Sigmoid colon (tissue), 7 donors: ENCODE measurements at regions of chr11 and their contacts with region 1.

Region 1: DNA sequence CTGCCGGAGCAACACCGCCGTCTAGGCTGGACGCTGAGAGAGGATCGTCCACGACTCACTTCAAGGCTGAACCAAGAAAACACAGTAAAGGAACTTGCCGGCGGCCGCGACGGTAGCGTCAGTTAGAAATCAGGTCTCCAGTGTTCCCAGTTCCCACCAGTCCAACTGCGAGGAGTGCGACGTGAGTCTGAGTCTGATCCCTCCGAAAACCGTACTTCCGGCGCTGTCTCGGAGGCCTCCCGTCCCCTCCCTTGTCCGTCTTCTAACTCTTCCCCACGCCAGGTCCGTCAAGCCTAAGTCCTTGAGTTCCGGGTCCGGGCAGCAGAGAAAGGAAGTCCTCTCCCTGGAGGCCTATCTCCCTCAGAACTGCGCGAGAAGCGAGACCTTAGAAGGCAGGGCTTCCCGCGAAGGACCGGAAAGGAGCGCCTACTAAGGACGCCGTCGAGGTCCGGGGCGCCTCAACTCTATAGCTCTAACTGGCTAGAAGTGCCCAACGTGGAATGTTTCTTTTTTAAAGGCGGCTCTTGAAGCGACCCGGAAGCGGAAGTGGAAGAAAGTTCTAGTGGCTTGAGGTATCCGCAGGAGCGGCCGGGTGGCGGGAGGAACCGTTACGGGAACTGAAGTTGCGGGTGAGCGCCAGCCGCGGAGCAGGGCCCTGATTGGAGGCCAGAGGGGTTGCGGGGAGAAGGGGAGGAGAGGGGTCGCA is at the starts of genes BANF1 and EIF1AD:
- DNase-seq: peak; percentile 97
- H3K4me3 ChIP-seq: peak within 1 kb of the TSS; percentile 66 to 85 (median 72)
- H3K27ac ChIP-seq: peak within 1 kb of the TSS; percentile 86 to 94 (median 92)
- H3K4me1 ChIP-seq: peaks cover 0 to 31% (median 26%) of the 10 kb centered on the region in 4 donors
- H3K27me3 ChIP-seq: no peaks in the 10 kb centered on the region
- CTCF ChIP-seq: no peak
- EP300 ChIP-seq: no peak
- POLR2A ChIP-seq: peak; percentile 17 to 56
- total RNA-seq, gene BANF1: 40.4 to 76.4 (median 50.5) TPM
- total RNA-seq, gene EIF1AD: 19.4 to 23.9 (median 21.1) TPM

Region 2: DNA sequence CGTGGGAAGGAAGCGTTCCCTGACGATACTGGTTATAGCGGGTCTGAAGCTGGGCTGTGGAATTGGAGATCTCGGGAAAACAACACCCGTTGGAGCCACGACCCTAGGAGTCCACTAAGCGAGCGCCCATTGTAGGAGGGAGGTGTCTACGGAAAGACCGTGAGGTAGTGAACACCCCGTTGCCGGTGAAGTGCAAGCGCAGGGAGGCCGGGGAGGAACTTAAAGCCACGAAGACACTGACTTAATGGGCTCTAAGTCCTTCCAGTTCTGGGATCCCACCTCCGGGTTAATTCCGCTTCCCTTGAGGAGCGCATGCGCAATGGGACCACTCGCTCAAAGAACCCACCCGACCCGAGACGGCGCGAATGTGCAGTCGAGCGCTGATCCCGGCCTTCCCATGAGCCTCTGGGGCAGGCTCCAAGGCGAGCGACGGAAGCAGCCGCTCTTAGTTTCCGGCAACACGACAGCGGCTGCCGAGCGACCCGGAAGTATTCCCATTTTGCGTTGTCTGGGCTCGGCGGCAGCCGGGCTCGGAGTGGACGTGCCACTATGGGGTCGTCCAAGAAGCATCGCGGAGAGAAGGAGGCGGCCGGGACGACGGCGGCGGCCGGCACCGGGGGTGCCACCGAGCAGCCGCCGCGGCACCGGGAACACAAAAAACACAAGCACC is 40.7 kb before region 1 on chr11 and contains the start of gene SART1:
- intact Hi-C with region 1: loop called (anchors 1 kb)
- DNase-seq: peak; percentile 99
- H3K4me3 ChIP-seq: peak within 1 kb of the TSS; percentile 92 to 99 (median 96)
- H3K27ac ChIP-seq: peak within 1 kb of the TSS; percentile 90 to 94 (median 92)
- H3K4me1 ChIP-seq: peaks cover 0 to 31% (median 30%) of the 10 kb centered on the region in 4 donors
- H3K27me3 ChIP-seq: no peaks in the 10 kb centered on the region
- CTCF ChIP-seq: no peak
- EP300 ChIP-seq: peak in 1 of 4 donors; percentile 49
- POLR2A ChIP-seq: peak in 1 of 2 donors; percentile 58
- total RNA-seq, gene SART1: 33.8 to 38.8 (median 37.0) TPM

Region 3: DNA sequence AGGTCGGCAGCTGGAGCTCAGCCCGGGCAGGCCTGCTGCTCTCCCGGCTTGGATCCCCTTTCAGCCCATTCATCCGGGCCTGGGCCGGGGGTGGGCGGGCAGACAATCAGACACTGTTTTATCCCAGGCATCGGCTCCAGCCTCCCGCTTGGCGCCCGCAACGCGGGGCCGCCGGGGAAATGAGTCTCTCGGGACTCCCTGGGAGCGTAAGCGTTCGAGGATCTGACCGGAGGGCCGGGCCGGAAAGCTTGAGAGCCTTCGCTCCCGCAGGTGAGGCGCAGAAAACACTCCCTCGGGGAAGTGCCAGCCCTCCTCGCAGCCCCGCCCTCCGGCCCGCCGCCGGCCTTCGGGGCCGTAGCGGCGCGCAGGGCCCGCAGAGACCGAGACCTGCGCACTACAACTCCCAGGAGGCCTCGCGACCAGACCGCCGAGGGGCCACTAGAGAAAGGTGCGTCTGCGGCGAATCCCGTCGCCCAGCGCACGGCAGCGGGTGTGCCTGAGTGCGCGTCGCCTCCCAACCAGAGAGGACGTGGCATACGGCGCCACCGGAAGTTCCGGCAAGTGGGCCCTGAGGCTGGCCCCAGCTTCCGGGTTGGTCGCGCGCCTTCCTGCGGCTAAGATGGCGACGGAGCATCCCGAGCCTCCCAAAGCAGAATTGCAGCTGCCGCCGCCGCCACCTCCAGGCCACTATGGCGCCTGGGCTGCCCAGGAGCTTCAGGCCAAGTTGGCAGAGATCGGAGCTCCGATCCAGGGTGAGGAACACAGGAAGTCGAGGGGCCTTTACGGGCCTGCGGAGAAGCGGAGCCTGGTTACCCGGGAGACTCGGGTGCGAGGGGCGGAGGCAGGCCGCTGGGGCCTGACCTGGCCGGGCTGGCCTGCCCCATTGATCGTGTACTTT is 49.9 kb after region 1 on chr11 and contains the start of gene SF3B2:
- intact Hi-C with region 1: loop called (anchors 5 kb)
- DNase-seq: peak; percentile 99
- H3K4me3 ChIP-seq: peak within 1 kb of the TSS; percentile 85 to 98 (median 91)
- H3K27ac ChIP-seq: peak within 1 kb of the TSS; percentile 84 to 90 (median 87)
- H3K4me1 ChIP-seq: peaks cover 0 to 33% (median 23%) of the 10 kb centered on the region in 4 donors
- H3K27me3 ChIP-seq: peaks cover 14 to 26% (median 21%) of the 10 kb centered on the region in 3 donors
- CTCF ChIP-seq: no peak
- EP300 ChIP-seq: no peak
- POLR2A ChIP-seq: peak; percentile 48 to 50
- total RNA-seq, gene SF3B2: 75.5 to 122 (median 102) TPM

Region 4: DNA sequence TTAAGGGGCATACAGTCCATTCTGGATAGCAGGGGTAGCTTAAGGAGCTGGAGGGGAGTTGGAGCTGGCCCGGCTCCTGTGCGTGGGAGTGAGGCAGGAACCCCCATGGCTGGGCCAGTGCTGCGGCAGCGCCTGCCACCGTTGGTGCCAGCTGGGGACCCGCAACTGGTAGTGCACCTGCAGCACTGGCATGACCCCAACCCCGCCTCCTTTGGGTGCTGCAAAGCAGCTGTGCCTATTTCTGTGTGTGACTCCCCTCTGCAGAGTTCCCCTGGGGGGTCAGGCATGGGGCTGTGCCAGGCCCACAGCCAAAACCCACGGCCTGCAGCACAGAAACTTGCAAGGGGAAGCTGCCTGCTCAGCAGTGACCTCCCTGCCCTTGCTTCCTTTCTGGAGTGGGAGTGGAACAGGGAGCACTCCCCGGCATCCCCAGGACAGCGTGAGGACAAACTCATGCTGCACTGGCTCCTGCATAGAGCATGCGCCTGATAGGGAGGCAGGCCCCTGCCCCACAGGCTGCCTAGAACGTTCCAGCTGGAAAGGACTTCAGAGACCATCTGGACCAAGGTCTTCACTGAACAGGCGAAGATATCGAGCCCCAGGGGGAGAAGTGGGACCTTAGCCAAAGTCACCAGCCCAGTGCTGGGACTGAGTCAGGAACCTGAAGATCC is 240.1 kb after region 1 on chr11:
- intact Hi-C with region 1: no loop called
- DNase-seq: no peak
- H3K4me3 ChIP-seq: no peak overlapping the region
- H3K27ac ChIP-seq: no peak overlapping the region
- H3K4me1 ChIP-seq: no peaks in the 10 kb centered on the region
- H3K27me3 ChIP-seq: no peaks in the 10 kb centered on the region
- CTCF ChIP-seq: no peak
- EP300 ChIP-seq: no peak
- POLR2A ChIP-seq: no peak